Thyroid gland (tissue), 4 donors: ENCODE measurements at regions of chr4 and their contacts with region 1.

Region 1: DNA sequence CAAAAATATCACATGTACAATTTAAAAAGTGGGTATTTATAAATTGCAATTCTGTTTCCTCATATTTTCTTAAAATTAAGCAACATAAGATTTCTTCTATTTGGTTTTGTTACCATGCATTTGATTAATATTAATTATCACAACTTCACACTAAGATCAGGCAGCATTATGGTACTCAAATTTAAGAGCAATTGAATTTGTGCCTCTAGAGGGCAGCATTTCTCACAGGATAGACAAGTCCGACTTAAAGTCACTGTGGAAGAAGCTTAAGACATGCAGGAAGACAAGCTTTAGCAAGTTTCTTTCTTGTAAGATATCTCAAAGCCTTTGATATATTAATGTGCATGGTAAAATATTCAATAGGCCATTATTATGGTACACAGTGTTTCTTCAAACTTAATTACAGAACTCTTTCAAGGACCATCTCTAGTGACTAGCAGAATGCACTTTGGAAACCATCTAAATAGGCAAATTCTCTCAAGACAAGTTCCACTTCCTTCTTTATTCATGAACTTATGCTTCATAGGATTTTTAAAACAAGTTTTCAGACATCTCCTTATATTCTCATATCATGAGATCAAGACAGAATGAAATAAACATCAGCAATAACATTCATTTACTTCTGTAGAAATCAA is 35.0 kb downstream of the FBXW7 start:
- DNase-seq: peak; percentile 20 to 33
- H3K4me3 ChIP-seq: no peak overlapping the region
- H3K27ac ChIP-seq: no peak overlapping the region
- H3K4me1 ChIP-seq: no peaks in the 10 kb centered on the region
- H3K27me3 ChIP-seq: no peaks in the 10 kb centered on the region
- CTCF ChIP-seq: peak; percentile 54 to 80 (median 67)
- POLR2A ChIP-seq: no peak

Region 2: DNA sequence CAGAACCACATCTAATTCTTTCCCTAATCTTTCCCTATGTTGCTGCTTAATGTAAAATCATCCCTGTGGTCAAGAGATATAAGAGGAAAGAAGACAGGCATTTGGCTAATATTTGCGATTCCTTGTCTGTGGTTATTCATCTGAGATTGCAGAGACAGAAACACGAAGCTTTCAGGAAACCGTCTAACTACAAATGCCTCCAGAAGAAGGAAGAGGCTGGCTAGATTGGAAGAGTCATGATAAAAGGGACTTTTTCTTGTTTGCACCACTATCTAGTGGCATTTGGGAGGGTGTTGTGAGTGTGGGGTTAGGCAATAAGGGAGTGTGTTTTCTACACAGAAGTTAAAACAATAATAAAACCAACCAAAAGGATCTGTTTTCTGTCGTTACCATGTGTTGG is 134.9 kb after region 1 on chr4:
- intact Hi-C with region 1: loop called (anchors 5 kb)
- DNase-seq: no peak
- H3K4me3 ChIP-seq: no peak overlapping the region
- H3K27ac ChIP-seq: no peak overlapping the region
- H3K4me1 ChIP-seq: no peaks in the 10 kb centered on the region
- H3K27me3 ChIP-seq: no peaks in the 10 kb centered on the region
- CTCF ChIP-seq: no peak
- POLR2A ChIP-seq: no peak